ENCODE measurements at regions of chr6 and their contacts with region 1.

Region 1: DNA sequence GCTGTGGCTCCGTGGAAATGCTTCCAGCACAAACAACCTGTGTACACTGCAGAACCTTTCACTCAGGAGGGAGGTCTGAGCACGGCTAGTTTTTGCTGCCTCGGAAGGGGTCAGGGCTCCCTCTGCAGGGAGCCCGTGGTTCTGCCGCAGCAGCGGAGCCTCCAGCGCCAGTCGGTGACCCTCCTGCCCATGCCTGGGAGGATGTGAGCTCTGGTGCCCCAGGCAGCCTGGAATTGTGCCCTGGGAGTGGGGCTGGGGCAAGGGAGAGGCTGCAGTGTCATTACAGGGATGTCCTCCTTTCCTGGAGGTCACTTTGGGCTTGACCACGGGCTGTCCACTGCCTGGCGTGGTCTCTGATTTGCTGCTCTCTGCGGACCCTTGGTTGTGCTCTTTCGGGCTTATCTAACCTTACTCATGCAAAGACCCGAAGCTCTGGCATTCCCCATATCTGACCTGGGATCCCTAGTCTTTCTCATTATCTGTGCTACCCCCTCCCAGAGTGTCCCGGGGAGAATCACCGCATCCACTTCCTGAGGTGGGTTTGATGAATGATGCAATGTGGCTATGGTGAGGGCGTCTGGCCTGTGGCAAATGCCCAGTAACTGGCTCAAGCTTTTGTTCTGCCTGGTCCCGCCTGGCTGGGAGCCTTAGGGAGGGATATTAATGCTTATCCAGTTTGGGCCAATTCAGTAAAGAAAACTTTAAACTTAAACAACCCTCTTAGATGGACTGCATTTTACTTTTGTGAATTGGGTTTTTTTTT is 59.6 kb upstream of the TAGAP start:
- DNase-seq: peak; percentile 72 to 84 (median 76)
- H3K4me3 ChIP-seq: peak overlapping the region in 1 of 7 experiments; percentile 24
- H3K27ac ChIP-seq: peak overlapping the region in 1 of 2 experiments; percentile 36
- H3K4me1 ChIP-seq: peaks cover 18 to 65% (median 49%) of the 10 kb centered on the region in 4 experiments
- H3K27me3 ChIP-seq: no peaks in the 10 kb centered on the region

Region 2: DNA sequence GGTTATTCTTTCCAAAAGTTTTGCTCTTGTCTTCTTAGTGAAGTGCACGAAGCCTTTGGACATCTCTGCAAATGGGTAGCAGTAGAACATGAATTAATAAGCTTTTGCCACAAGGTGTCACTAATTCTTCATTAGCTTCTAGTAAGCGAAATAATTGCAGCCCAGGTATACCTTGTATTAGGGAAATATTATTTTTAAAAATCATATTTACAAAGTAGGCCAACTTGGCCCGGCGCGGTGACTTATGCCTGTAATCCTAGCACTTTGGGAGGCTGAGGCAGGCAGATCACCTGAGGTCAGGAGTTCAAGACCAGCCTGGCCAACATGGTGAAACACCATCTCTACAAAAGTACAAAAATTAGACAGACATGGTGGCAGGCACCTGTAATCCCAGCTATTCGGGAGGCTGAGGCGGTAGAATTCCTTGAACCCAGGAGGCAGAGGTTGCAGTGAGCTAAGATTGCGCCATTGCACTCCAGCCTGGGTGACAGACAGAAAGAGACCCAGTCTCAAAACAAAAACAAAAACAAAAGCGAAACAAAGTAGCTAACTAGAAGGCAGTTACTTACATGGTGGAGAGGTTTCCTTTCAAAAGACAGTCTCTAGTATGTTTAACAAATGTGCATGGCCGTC is 95.6 kb before region 1 on chr6:
- CTCF ChIA-PET with region 1: interaction called, 230 read pairs
- POLR2A ChIA-PET with region 1: interaction called, 6 read pairs
- DNase-seq: peak; percentile 61 to 73 (median 64)
- H3K4me3 ChIP-seq: peak overlapping the region in 1 of 7 experiments; percentile 20
- H3K27ac ChIP-seq: no peak overlapping the region
- H3K4me1 ChIP-seq: peaks cover 2 to 15% (median 9%) of the 10 kb centered on the region in 4 experiments
- H3K27me3 ChIP-seq: no peaks in the 10 kb centered on the region

Region 3: DNA sequence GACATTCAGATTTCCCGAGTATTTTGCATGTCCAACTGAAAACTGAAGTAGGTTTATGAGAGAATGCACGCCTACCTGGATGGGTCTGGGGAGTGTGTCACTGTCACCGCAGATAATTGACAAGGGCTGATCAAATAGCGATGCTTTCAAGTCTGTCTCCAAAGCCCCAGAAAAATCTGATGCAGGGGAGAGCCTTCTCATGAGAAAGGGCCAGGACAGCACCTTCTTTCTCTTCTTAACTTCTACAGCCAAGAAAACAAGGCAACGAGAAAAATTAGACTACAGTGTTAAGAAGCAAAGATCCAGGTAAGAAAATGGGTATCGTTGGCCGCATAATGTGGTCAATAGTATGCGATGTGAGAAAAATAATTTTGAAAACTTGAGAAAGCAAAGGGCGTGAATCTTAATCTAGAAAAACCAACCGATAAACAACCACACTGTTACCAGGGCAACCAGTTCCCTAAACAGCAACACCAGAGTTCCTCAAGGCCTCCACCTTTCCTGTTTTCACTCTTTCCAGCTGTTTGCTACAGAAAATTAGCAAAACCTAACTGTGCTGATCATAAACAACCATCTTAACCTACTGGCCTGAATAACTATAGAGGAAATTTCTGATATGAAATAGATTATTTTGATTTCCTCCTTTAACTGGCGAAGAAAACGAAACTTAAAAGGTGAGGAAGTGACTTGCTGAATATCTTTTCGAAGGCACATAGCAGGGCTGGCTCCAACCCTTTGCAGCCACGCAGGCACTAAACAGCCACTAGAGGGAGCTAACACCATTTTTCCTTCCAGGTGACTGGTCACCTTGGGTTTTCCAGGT is 62.1 kb before region 1 on chr6:
- CTCF ChIA-PET with region 1: interaction called, 109 read pairs
- POLR2A ChIA-PET with region 1: interaction called, 8 read pairs
- DNase-seq: peak; percentile 94 to 96 (median 96)
- H3K4me3 ChIP-seq: peak overlapping the region in 6 of 7 experiments; percentile 81 to 99 (median 96)
- H3K27ac ChIP-seq: peak overlapping the region; percentile 98 to 99
- H3K4me1 ChIP-seq: peaks cover 64 to 73% (median 67%) of the 10 kb centered on the region in 4 experiments
- H3K27me3 ChIP-seq: no peaks in the 10 kb centered on the region

Region 4: GRCh38 chr6:159062564-159062945 is 41.8 kb before region 1 on chr6:
- CTCF ChIA-PET with region 1: interaction called, 30 read pairs
- POLR2A ChIA-PET with region 1: no interaction called
- DNase-seq: peak in 2 of 3 donors; percentile 79 to 83
- H3K4me3 ChIP-seq: peak overlapping the region in 1 of 7 experiments; percentile 26
- H3K27ac ChIP-seq: peak overlapping the region in 1 of 2 experiments; percentile 50
- H3K4me1 ChIP-seq: peaks cover 17 to 47% (median 22%) of the 10 kb centered on the region in 4 experiments
- H3K27me3 ChIP-seq: no peaks in the 10 kb centered on the region

Measured in common myeloid progenitor, CD34-positive (primary cell).